Panc1 (cell line): ENCODE measurements at regions of chr17 and their contacts with region 1.

Region 1: GRCh38 chr17:64968652-64969501 is 49.6 kb upstream of the LRRC37A3 start:
- DNase-seq: no peak
- ATAC-seq: no peak
- H3K4me3 ChIP-seq: no peak overlapping the region
- H3K27ac ChIP-seq: no peak overlapping the region
- H3K4me1 ChIP-seq: peaks cover 5% of the 10 kb centered on the region
- H3K27me3 ChIP-seq: no peaks in the 10 kb centered on the region
- CTCF ChIP-seq: no peak

Region 2: GRCh38 chr17:64773836-64774761 is 194.8 kb before region 1 on chr17:
- CTCF ChIA-PET with region 1: no interaction called
- POLR2A ChIA-PET with region 1: no interaction called
- in situ Hi-C with region 1: no loop called
- intact Hi-C with region 1: loop called (anchors 10 kb)
- DNase-seq: no peak
- ATAC-seq: peak; percentile 90
- H3K4me3 ChIP-seq: peak overlapping the region; percentile 39 to 51
- H3K27ac ChIP-seq: peak overlapping the region; percentile 44; the same call in 1 of the 2 replicates
- H3K4me1 ChIP-seq: no peaks in the 10 kb centered on the region; the same call in none of the 2 replicates
- H3K27me3 ChIP-seq: no peaks in the 10 kb centered on the region
- CTCF ChIP-seq: peak; percentile 75

Region 3: GRCh38 chr17:65198653-65199382 is 229.9 kb after region 1 on chr17:
- CTCF ChIA-PET with region 1: no interaction called
- POLR2A ChIA-PET with region 1: no interaction called
- in situ Hi-C with region 1: no loop called
- intact Hi-C with region 1: loop called (anchors 10 kb)
- DNase-seq: peak; percentile 25
- ATAC-seq: peak; percentile 58; the same call in 1 of the 2 replicates
- H3K4me3 ChIP-seq: no peak overlapping the region
- H3K27ac ChIP-seq: no peak overlapping the region
- H3K4me1 ChIP-seq: no peaks in the 10 kb centered on the region
- H3K27me3 ChIP-seq: no peaks in the 10 kb centered on the region
- CTCF ChIP-seq: peak; percentile 73